ENCODE measurements at regions of chr22 and their contacts with region 1.

Region 1: DNA sequence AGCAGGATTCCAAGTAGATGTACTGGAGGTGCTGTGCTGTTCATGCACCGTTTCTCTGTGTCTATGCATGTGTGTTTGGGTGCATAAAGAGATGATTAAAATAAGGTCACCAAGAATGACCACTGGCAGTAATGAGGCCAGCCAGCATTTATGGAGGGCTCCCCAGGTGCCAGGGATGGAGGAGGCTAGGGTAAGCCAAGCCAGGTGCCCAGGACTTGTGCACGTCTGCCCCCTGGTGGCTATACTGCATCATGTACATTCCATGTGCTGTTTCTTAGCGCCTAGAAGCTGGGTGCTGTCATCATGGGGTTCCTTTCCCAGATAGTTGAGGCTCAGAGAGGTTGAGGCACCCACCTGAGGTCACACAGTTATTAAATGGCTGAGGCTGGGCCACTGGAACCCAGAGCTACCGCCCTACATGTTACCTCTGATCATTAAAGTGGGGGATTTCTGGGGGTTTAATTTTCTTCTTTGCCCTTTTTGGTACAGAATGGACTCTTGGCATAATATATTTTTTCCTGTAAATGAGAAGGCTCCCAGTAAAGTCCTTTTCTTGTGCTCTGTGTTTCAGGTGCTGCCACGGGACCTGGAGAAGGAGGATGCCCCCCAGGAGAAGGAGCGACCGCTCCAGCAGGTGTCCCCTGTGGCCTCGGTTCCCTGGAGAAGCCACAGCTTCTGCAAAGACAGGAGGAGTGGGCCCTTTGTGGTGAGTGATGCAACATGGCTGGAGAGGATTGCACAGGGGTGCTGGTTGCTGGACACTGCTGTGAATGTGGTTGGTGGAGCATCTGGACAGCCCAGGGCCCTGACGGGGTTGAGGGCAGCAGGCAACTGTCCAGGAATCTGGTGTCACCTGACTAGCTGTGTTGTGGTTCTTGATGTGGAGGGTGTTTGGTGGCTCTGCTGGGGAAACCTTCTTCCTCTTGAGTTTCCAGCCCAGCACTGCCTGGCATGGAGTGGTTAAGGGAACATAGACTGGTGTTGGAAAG is 96.4 kb downstream of the KIAA1671 start:
- DNase-seq: peak; percentile 46
- ATAC-seq: peak; percentile 77

Region 2: DNA sequence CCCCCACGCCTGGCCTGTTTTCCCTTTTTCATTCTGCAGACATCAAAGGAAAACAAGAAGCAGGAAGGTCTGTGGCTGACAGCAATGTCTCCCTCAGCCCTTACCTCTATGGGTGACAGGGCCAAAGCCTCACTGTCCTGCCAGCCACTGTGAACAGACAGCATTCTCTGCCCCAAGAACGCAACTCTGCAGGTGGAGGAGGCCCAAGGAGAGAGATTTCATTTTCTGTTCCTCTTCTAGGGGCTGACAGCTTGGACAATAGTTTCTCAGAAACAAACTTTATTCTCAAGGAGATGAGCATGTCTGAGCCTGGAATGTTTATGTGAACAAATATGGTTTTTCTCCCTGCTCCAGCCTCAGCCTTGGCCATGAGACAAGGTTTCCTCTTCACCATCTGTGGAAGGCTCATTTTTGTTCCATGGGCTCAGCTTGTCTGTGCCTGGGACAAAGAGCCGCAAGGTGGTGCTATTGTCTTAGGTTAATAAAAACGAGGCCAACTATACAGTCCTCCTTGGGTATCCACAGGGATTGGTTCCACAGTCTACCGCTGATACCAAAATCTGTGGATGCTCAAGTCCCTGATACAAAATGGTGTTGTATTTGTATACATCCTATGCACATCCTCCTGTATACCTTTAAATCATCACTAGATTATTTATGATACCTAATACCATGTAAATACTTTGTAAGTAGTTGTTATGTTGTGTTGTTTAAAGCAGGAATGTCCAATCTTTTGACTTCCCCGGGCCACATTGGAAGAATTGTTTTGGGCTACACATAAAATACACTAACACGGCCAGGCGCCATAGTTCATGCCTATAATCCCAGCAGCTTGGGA is 280.2 kb before region 1 on chr22:
- intact Hi-C with region 1: loop called (anchors 5 kb)
- DNase-seq: no peak
- ATAC-seq: peak; percentile 57